ENCODE measurements at regions of chr6 and their contacts with region 1.

Region 1: DNA sequence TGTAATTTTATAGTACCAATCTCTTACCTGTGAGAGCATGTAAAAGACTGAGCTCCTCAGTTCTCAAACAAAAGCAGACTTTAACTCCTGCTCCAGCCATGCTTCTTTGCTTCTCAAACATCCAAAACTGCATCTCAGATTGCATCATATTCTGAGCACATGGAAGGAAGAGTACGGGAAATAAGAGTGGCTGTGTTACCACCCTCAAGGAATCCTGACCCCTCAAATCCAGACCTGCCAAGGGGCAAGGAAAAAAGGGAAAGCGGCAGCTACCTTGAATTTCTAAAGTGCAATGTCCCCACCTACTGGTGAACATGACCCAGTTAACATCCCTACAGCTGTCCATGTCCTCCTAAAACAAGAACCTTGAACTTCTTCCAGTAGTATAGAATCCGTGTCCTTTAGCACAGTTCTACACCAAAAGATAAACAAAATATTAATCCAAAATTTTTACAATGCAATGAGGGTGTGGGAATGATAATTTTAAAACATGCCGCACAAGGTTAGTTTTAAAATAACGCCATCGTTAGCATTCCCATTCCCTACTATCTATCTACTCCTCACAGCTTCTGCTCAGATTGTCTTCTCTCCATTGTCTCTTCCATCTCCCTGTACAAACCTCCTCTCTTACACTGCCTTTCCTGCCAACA is 34.1 kb upstream of the HLA-DQB1 start:
- DNase-seq: peak; percentile 21
- H3K4me3 ChIP-seq: no peak overlapping the region
- H3K27ac ChIP-seq: no peak overlapping the region
- H3K4me1 ChIP-seq: no peaks in the 10 kb centered on the region
- H3K27me3 ChIP-seq: peaks cover 62% of the 10 kb centered on the region
- CTCF ChIP-seq: peak; percentile 55 to 65 (median 62)
- EP300 ChIP-seq: no peak
- POLR2A ChIP-seq: no peak

Region 2: DNA sequence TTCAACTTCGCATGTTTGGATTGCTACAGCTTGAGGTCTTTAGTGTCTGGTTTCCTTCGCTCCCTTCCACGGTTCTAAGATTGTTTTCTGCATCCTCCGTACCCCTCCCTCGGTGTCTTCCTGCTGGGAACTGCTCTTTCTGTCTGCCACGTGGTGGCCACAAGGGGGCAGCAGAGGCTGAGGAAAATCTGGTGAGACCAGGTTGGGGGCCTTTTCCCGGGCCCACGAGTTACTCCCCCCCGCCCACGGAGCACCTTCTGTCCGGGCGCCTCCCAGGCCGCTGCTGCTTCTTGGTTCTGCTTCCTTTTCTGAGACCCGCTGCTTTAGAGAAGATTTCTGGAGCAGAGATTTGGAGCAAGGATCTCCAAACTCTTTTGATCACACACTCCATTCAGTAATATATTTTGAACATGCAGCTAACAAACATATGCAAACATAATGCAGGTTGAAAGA is 455.5 kb before region 1 on chr6:
- in situ Hi-C with region 1: loop called in 2 of 4 experiments (anchors 10 kb)
- intact Hi-C with region 1: no loop called
- DNase-seq: peak; percentile 81
- H3K4me3 ChIP-seq: peak overlapping the region in 1 of 4 donors; percentile 27
- H3K27ac ChIP-seq: peak overlapping the region; percentile 36 to 61 (median 56)
- H3K4me1 ChIP-seq: peaks cover 0 to 8% (median 5%) of the 10 kb centered on the region in 4 donors
- H3K27me3 ChIP-seq: no peaks in the 10 kb centered on the region
- CTCF ChIP-seq: peak; percentile 87 to 93 (median 91)
- EP300 ChIP-seq: no peak
- POLR2A ChIP-seq: no peak

Region 3: DNA sequence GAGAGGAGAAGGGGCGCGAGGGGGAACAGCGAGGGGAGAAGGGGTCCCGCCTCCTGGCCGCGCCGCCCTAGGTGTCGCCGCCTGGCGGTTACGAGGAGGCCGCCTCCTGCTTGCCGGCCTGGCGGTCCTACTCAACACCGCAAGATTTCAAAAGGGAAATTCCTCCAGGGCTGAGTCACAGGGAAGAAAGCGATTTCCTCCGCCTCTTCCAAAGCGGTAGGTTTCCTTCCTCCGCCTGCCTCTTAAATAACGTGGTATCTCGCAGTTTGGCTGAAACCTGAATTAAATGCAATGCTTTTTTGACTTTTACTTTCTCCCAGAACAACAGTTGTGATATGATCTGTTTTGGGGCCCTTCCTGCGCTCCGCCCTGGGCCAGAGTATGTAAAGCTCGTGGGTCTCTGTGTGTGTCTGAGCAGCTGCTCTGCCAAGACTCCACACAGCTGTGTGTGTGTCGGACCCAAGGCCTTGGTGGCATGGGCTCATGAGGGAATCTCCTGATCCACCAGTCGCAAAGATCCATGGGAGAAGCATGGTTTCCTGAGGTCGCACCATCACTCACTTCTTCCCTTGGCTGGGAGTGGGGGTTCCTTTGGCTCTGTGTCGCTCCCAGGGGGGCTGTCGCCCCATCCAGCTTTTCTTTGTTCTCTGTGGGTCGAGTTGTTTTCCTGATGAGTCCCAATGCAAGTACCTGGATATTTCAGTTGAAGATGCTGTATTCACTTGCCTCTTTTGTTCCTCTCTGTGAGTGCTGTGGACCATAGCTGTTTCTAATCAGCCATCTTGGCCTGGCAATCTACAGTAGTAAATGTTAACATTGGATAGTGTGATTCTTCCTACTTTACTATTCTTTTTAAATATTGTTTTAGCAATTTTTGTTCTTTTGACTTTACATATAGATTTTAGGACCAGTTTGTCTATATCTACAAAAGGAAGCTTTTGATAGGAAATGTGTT is 445.0 kb before region 1 on chr6:
- in situ Hi-C with region 1: no loop called
- intact Hi-C with region 1: no loop called
- DNase-seq: peak; percentile 55
- H3K4me3 ChIP-seq: peak overlapping the region in 3 of 4 donors; percentile 10 to 44 (median 23)
- H3K27ac ChIP-seq: peak overlapping the region; percentile 69 to 76 (median 73)
- H3K4me1 ChIP-seq: peaks cover 0 to 10% (median 2%) of the 10 kb centered on the region in 4 donors
- H3K27me3 ChIP-seq: peaks cover 24% of the 10 kb centered on the region
- CTCF ChIP-seq: peak; percentile 46 to 66 (median 60)
- EP300 ChIP-seq: no peak
- POLR2A ChIP-seq: no peak

Region 4: DNA sequence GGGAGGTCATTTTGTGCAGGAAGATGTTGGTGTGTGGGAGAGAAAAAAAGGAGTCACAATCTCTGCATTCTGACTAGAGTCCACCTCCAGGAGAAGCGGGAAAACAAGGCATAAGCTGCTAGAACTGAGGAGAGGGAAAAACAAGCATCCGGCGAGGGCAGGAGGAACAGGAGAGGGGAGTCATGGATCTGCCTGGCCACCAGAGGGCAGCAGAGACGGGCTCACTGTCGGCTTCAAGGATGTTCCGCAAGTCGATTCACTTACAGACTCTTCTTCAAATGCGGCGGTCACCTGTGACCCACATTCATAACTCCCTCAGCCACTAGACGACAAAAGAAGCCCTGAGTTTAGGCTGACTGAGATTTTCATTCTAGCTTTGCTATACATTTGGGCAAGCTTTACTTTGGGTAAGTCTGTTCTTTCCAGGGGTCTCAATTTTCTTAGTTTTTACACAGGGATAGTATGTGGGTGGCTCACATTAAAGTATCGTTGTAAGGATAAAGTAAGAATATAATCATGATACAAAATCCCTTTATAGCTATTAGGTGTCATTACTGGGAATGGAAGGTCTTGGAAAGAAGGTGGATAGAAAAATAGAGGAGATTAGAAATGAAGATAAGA is 287.0 kb before region 1 on chr6:
- in situ Hi-C with region 1: loop called in 2 of 4 experiments (anchors 5 kb)
- intact Hi-C with region 1: loop called (anchors 2 kb)
- DNase-seq: peak; percentile 84
- H3K4me3 ChIP-seq: no peak overlapping the region
- H3K27ac ChIP-seq: no peak overlapping the region
- H3K4me1 ChIP-seq: peaks cover 0 to 28% (median 13%) of the 10 kb centered on the region in 4 donors
- H3K27me3 ChIP-seq: peaks cover 76% of the 10 kb centered on the region
- CTCF ChIP-seq: peak; percentile 91 to 98 (median 95)
- EP300 ChIP-seq: no peak
- POLR2A ChIP-seq: no peak

Region 5: DNA sequence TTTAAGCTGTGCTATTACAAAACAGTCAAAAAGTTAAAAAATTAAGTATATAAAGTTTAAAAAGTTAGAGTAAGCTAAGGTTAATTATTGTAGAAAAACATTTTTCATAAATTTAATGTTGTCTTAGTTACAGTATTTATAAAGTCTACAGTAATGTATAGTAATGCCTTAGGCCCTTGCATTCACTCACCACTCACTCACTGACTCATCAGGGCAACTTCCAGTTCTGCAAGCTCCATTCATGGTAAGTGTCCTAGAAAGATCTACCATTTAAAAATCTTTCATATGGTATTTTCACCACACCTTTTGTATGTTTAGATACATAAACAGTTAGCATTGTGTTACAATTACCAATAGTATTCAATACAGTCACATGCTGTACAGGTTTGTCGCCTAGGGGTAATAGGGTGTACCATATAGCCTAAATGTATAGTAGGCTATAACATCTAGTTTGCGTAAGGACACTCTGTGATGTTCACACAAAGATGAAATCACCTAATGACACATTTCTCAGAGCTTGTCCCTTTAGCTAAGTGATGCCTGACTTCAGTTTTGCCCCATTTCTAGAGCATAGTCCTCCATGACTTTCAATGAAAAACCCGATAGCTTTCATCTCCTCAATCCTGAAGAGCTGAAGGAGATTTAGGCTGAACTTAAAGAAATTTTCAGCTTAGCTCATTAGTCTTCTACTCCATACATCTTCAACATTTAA is 275.8 kb before region 1 on chr6:
- in situ Hi-C with region 1: loop called in 3 of 4 experiments (anchors 5 kb)
- intact Hi-C with region 1: no loop called
- DNase-seq: no peak
- H3K4me3 ChIP-seq: no peak overlapping the region
- H3K27ac ChIP-seq: no peak overlapping the region
- H3K4me1 ChIP-seq: peaks cover 0 to 6% (median 0%) of the 10 kb centered on the region in 4 donors
- H3K27me3 ChIP-seq: peaks cover 16% of the 10 kb centered on the region
- CTCF ChIP-seq: no peak
- EP300 ChIP-seq: no peak
- POLR2A ChIP-seq: no peak

Region 6: DNA sequence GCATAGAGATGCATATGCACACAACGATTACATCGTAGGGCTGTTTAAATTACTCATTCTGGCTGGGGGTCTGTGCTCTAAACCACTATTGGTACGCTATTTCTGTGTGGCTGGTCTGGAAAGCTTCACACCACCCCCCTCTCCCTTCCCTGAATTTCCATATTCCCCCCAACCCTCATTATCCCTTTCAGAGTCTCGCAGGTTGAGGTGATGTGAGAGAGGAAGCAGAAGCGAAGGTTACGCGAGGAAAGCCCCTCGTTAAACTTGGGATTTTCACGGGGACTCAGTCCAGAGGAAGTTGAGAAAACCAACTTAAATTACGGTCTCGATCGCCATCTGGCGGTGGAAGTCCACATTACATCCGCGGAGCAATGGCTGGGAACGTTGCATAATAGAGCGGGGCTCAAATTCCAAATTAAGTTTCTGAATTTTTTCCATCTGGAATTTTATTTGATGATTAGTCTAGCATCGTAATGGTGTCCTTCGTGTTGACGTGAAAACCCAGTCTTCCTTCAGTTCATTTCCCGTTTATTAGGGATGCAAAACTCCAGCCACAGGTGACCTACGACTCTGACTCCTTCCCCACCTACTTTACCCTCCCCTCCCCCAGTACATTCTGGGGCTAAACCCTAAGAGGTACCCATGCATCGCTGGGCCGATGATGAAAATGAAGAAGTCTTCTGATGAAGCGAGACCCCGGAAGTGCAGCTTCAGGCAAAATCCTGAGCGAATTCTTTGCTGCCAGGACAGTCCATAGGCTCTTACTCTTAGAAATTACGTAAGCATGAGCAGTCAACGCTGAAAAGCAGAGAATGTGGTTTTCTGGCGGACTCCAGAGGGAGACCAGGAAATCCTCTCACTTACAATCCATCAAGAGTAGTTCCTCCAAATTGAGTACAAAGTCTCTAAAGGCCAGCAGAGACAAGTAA is 96.6 kb after region 1 on chr6:
- in situ Hi-C with region 1: loop called in 2 of 4 experiments (anchors 5 to 10 kb)
- intact Hi-C with region 1: no loop called
- DNase-seq: peak; percentile 81
- H3K4me3 ChIP-seq: peak overlapping the region in 1 of 4 donors; percentile 19
- H3K27ac ChIP-seq: no peak overlapping the region
- H3K4me1 ChIP-seq: peaks cover 0 to 7% (median 2%) of the 10 kb centered on the region in 4 donors
- H3K27me3 ChIP-seq: peaks cover 82% of the 10 kb centered on the region
- CTCF ChIP-seq: peak; percentile 89 to 93 (median 91)
- EP300 ChIP-seq: no peak
- POLR2A ChIP-seq: no peak

Region 7: GRCh38 chr6:32933636-32934085 is 233.1 kb after region 1 on chr6:
- in situ Hi-C with region 1: no loop called
- intact Hi-C with region 1: no loop called
- DNase-seq: peak; percentile 85
- H3K4me3 ChIP-seq: no peak overlapping the region
- H3K27ac ChIP-seq: no peak overlapping the region
- H3K4me1 ChIP-seq: no peaks in the 10 kb centered on the region
- H3K27me3 ChIP-seq: no peaks in the 10 kb centered on the region
- CTCF ChIP-seq: peak; percentile 77 to 87 (median 85)
- EP300 ChIP-seq: no peak
- POLR2A ChIP-seq: no peak

Measured in transverse colon (tissue), 4 donors.